ENCODE measurements at regions of chr13 and their contacts with region 1.

Region 1: GRCh38 chr13:49300739-49301589 is 53.2 kb downstream of the CDADC1 start:
- DNase-seq: peak; percentile 90
- H3K4me3 ChIP-seq: peak overlapping the region; percentile 39
- H3K27ac ChIP-seq: no peak overlapping the region
- H3K4me1 ChIP-seq: peaks cover 44% of the 10 kb centered on the region
- CTCF ChIP-seq: peak; percentile 98

Region 2: GRCh38 chr13:48994706-48995105 is 306.3 kb before region 1 on chr13:
- CTCF ChIA-PET with region 1: no interaction called
- POLR2A ChIA-PET with region 1: no interaction called
- intact Hi-C with region 1: no loop called
- DNase-seq: no peak
- H3K4me3 ChIP-seq: no peak overlapping the region
- H3K27ac ChIP-seq: no peak overlapping the region
- H3K4me1 ChIP-seq: no peaks in the 10 kb centered on the region
- CTCF ChIP-seq: no peak

Region 3: DNA sequence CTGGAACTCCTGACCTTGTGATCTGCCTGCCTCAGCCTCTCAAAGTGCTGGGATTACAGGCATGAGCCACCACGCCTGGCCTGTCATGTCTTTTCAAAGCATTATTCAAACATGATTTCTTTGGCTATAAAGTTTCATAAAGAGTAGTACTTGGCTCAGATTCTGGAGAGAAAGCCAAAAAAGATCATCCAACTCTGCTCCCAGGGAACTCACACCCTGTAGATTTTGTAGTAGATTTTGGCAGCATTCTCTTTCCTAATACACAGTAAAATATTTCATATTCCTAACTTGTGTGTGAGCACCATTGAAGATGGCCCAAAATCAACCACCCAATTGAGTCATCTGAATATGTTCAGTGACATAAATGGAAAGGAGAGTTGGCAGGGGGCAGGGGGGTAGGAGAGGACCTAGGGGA is 94.5 kb after region 1 on chr13:
- CTCF ChIA-PET with region 1: no interaction called
- POLR2A ChIA-PET with region 1: interaction called, 4 read pairs
- intact Hi-C with region 1: loop called (anchors 1 kb)
- DNase-seq: no peak
- H3K4me3 ChIP-seq: no peak overlapping the region
- H3K27ac ChIP-seq: no peak overlapping the region
- H3K4me1 ChIP-seq: peaks cover 24% of the 10 kb centered on the region
- CTCF ChIP-seq: no peak

Region 4: DNA sequence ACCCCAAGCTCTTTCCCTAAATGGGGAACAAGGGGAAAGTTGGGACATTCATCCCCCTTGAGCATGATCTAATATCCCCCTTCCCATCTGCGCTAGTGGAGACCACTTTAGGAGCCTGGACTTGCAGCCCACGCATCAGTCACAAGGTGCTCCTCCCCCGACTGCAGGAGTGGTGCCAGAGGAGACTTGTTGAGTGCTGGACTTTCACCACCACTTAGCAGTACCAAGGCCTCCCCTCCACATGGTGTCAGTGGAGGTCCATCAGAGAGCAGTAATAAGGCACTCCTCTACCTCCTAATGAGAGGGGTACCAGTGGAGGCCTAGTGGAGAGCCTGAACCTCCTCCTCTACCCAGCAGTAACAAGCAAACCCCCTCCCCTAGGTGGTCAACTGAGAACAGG is 120.4 kb after region 1 on chr13:
- CTCF ChIA-PET with region 1: no interaction called
- POLR2A ChIA-PET with region 1: interaction called, 6 read pairs
- intact Hi-C with region 1: loop called (anchors 1 kb)
- DNase-seq: peak; percentile 83
- H3K4me3 ChIP-seq: no peak overlapping the region
- H3K27ac ChIP-seq: no peak overlapping the region
- H3K4me1 ChIP-seq: peaks cover 54% of the 10 kb centered on the region
- CTCF ChIP-seq: peak; percentile 80

Region 5: DNA sequence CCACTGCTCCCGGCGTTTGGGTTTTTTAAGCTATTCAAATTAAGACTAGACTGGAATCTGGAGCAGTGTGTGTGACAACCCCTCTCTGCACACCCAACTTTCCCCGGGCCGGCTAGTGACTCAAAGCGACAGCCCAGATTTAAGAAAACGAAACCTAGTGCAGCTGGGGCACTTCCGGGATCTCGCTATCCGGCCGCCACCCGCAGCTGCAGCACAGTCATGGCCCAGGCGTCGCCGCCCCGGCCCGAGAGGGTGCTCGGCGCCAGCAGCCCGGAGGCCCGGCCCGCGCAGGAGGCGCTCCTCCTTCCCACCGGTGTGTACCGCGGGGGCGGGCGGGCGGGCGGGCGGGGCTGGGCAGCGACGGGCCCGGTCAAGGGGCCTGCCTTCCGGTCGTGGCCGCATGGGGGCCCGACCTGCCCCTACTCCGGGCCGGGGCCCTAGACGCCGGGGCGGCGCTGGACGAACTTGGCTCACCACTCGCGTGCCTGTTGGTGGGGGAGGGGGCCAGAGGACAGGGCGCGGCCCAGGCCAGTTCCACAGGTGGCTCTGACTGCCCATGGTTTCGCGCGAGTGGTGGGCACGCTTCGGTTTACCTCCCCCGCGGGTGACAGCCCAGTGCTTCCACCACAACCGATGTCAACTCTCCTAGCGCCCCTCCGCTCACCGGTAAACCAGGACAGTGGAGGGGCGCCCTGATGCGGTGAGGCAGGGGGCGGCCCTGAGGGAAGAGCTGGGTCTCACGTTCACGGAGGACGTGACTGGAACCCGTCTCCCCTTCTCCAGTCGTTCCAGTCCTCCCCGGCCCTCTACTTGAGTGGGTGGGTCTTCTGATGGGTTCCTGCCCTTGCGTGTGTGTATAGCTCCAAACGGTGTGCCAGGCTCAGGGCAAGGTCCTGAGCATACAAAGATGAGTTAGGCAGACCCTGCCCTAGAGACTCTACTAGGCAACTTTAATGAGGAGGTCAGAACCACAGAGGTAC is 195.1 kb after region 1 on chr13 and contains the start of gene PHF11:
- CTCF ChIA-PET with region 1: no interaction called
- POLR2A ChIA-PET with region 1: interaction called, 4 read pairs
- intact Hi-C with region 1: loop called (anchors 1 kb)
- DNase-seq: peak; percentile 94
- H3K4me3 ChIP-seq: peak within 1 kb of the TSS; percentile 76
- H3K27ac ChIP-seq: peak within 1 kb of the TSS; percentile 91
- H3K4me1 ChIP-seq: peaks cover 44% of the 10 kb centered on the region
- CTCF ChIP-seq: peak; percentile 36; the same call in 1 of the 2 replicates
- total RNA-seq, gene PHF11: 29.9 and 32.8 TPM in 2 replicates

Measured in OCI-LY7 (cell line).